ENCODE measurements at regions of chr11 and their contacts with region 1.

Region 1: DNA sequence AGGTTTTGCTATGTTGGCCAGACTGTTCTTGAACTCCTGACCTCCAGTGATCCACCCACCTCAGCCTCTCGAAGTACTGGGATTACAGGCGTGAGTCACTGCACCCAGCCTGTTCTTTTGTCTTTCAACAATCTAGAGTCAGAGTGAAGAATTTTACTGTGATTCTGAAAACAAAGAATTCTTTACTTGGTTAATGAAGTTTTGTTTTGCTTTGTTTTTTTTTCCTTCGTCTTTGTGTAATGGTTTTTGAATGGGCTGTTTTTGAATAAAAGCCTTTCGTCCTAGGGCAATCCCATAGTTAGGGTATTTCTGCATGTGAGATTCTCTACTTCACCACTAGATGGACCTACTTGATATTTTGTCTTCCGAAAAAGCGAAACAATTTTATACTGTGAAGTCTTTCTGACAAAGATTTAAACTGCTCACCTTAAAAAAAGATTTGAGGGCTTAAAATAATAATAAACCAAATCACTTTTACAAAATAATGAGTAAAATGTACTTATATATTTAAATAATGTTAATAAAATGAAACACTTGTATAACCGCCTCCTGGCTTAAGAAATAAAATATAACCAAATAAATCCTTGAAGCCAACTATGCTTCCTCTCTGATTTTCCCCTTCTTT is 43.4 kb upstream of the SC5D start:
- DNase-seq: no peak
- ATAC-seq: peak in 2 of 4 donors; percentile 61 to 65
- H3K4me3 ChIP-seq: no peak overlapping the region
- H3K27ac ChIP-seq: no peak overlapping the region
- H3K4me1 ChIP-seq: peaks cover 0 to 4% (median 0%) of the 10 kb centered on the region in 12 donors
- H3K27me3 ChIP-seq: no peaks in the 10 kb centered on the region
- CTCF ChIP-seq: peak; percentile 58 to 80 (median 76)
- POLR2A ChIP-seq: no peak

Region 2: DNA sequence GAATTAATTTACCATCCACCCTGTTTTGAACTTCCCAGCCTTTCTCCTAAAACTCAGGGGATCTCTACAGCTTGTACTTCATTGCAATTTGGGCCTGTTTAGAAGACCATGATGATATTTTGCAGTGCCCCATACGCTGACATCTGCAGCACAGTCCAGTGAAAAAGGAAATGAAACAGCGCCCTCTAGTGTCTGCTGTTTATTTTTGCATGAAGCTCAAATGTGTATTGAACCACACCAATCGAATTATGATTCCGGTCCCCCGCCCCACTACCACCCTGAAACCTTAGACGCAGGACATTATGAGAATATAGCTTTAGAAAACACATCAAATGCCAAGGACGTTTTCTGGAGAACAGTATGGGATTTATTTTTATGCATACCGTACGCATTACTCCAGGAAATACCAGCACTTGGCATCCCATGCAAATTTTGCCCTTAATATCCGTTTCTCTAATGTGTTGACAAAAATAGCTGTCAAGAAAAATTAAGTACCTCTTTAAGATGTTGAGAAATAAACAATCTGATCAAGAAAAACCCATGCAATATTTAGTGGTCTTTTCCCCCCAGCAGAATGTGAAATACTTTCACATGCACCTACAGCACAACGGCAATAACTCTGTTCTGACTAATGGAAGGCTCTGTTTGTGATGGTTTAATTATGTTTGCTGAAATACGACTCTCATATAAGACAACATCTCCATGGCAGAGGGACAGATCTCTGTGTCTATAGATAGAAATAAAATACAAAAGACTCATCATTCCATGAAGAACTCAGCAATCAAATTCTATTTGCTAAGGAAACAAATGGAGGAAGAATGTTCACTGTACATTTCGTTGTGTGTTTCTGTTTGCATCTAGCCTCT is 54.2 kb before region 1 on chr11:
- intact Hi-C with region 1: no loop called
- DNase-seq: peak in 2 of 5 donors; percentile 29 to 40
- ATAC-seq: peak; percentile 55 to 81 (median 78)
- H3K4me3 ChIP-seq: no peak overlapping the region
- H3K27ac ChIP-seq: no peak overlapping the region
- H3K4me1 ChIP-seq: peaks cover 0 to 17% (median 0%) of the 10 kb centered on the region in 12 donors
- H3K27me3 ChIP-seq: peaks cover 0 to 20% (median 0%) of the 10 kb centered on the region in 9 donors
- CTCF ChIP-seq: peak; percentile 72 to 88 (median 83)
- POLR2A ChIP-seq: no peak

Region 3: GRCh38 chr11:121591405-121592033 is 342.4 kb after region 1 on chr11:
- intact Hi-C with region 1: loop called (anchors 2 to 10 kb)
- DNase-seq: peak in 4 of 5 donors; percentile 43 to 67 (median 57)
- ATAC-seq: peak; percentile 45 to 82 (median 78)
- H3K4me3 ChIP-seq: no peak overlapping the region
- H3K27ac ChIP-seq: no peak overlapping the region
- H3K4me1 ChIP-seq: peaks cover 0 to 19% (median 0%) of the 10 kb centered on the region in 12 donors
- H3K27me3 ChIP-seq: no peaks in the 10 kb centered on the region
- CTCF ChIP-seq: peak; percentile 78 to 92 (median 87)
- POLR2A ChIP-seq: no peak